GM10248 (cell line): ENCODE measurements at regions of chr19 and their contacts with region 1.

Region 1: DNA sequence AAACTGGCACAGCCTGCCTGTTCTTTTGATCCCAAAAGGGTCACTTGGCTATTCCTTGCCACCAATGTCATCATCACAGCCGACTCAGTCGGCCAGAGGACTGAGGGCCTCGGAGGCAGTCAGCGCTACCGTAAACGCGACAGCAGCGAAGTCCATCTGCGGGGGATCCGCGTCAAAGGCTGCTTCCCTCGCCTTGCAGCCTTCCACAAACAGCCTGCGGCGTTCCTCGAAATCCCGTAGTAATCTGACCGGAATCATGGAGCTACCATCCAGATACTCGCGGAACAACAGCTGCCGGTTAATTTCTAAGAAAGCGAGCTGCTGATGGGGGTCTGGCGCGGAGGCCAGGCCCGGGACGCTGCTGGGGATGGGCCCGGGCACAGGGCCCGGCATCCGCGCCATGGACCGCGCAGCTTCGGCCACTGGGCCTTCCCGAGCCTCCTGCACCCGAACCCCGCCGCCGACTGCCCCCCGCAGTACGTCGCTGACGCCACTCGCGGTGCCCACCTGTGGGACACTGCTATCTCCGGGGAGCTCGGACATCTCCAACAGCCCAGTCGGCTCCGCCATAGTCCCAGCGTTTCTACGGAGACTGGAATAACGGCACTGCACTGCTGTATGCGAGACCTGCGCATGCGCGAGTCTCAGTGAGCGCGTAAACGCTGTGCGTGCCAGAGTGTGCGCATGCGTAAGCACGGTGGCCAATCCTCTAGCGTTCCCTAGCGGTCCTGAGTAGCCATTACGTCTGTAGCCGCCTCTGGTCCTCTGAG is at the start of gene EID2B:
- DNase-seq: peak; percentile 97
- CTCF ChIP-seq: peak; percentile 97

Region 2: GRCh38 chr19:39397360-39398296 is 134.8 kb before region 1 on chr19:
- CTCF ChIA-PET with region 1: interaction called, 19 read pairs
- POLR2A ChIA-PET with region 1: no interaction called
- DNase-seq: peak; percentile 90
- CTCF ChIP-seq: peak; percentile 99

Region 3: GRCh38 chr19:39435499-39436349 is 96.7 kb before region 1 on chr19 and contains the start of gene RPS16:
- CTCF ChIA-PET with region 1: interaction called, 38 read pairs
- POLR2A ChIA-PET with region 1: no interaction called
- DNase-seq: peak; percentile 97
- CTCF ChIP-seq: no peak

Region 4: DNA sequence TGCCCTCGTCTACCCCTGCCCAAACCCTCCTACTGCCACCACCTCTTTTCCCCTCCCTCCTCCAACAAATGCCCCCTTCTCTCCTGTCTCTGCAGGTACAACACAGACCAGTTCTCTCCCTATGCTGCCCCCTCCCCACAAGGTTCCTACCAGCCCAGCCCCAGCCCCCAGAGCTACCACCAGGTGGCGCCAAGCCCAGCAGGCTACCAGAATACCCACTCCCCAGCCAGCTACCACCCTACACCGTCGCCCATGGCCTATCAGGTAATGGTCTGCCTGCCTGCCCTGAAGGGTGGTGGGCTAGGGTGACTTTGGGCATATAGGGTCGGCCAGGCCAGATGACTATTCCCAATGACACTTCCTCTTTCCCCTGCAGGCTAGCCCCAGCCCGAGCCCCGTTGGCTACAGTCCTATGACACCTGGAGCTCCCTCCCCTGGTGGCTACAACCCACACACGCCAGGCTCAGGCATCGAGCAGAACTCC is 58.2 kb before region 1 on chr19:
- CTCF ChIA-PET with region 1: interaction called, 38 read pairs
- POLR2A ChIA-PET with region 1: no interaction called
- DNase-seq: peak; percentile 72
- CTCF ChIP-seq: peak; percentile 66

Region 5: DNA sequence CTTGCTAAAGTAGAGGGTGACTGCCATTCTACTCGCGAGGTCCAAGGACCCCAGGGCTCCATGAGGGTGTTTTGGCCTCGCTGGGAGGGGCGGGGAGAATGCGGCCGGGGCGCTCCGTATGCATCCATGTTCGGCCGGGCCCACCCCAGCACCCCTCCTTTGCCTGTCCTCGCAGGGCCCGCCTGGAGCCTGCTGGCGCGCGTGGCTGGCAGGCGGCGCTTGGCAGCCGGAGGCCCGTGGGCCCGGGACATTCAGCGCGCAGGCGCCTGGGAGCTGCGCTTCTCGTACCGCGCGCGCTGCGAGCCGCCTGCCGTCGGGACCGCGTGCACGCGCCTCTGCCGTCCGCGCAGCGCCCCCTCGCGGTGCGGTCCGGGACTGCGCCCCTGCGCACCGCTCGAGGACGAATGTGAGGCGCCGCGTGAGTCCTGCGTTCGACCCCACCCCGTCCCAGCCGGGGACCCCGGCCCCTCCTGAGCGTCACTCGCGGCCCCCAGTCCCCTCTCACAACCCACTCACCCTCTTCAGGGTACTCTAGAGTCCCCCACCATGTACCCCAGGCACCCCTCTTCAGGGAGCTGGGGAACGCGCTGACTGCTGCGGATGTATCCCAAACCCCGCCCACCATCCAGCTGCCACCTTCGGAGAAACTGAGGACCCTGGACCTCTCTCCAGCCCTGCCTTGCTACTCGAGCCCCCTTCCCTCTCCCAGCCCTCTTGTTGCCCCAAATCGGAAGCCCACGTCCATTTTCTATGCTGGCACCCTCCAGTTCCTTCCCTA is 29.6 kb before region 1 on chr19:
- CTCF ChIA-PET with region 1: interaction called, 16 read pairs
- POLR2A ChIA-PET with region 1: no interaction called
- DNase-seq: peak; percentile 87
- CTCF ChIP-seq: peak; percentile 87

Region 6: GRCh38 chr19:39514840-39515550 is 17.4 kb before region 1 on chr19 and contains the start of gene SELENOV:
- CTCF ChIA-PET with region 1: interaction called, 18 read pairs
- POLR2A ChIA-PET with region 1: no interaction called
- DNase-seq: no peak
- CTCF ChIP-seq: no peak

Region 7: GRCh38 chr19:39520191-39520471 is 12.3 kb before region 1 on chr19:
- CTCF ChIA-PET with region 1: interaction called, 18 read pairs
- POLR2A ChIA-PET with region 1: no interaction called
- DNase-seq: no peak
- CTCF ChIP-seq: no peak